ENCODE measurements at regions of chr6 and their contacts with region 1.

Region 1: GRCh38 chr6:50816115-50816675 is 2.5 kb upstream of the TFAP2B start:
- DNase-seq: peak; percentile 74
- H3K4me3 ChIP-seq: peak overlapping the region; percentile 4 to 62 (median 36)
- H3K27ac ChIP-seq: no peak overlapping the region
- H3K4me1 ChIP-seq: peaks cover 0 to 26% (median 12%) of the 10 kb centered on the region in 4 donors
- H3K27me3 ChIP-seq: peaks cover 82% of the 10 kb centered on the region
- CTCF ChIP-seq: peak; percentile 75 to 86 (median 80)
- EP300 ChIP-seq: no peak
- POLR2A ChIP-seq: no peak

Region 2: GRCh38 chr6:50539447-50539846 is 276.7 kb before region 1 on chr6:
- in situ Hi-C with region 1: no loop called
- intact Hi-C with region 1: no loop called
- DNase-seq: no peak
- H3K4me3 ChIP-seq: no peak overlapping the region
- H3K27ac ChIP-seq: no peak overlapping the region
- H3K4me1 ChIP-seq: no peaks in the 10 kb centered on the region
- H3K27me3 ChIP-seq: no peaks in the 10 kb centered on the region
- CTCF ChIP-seq: no peak
- EP300 ChIP-seq: no peak
- POLR2A ChIP-seq: no peak

Region 3: DNA sequence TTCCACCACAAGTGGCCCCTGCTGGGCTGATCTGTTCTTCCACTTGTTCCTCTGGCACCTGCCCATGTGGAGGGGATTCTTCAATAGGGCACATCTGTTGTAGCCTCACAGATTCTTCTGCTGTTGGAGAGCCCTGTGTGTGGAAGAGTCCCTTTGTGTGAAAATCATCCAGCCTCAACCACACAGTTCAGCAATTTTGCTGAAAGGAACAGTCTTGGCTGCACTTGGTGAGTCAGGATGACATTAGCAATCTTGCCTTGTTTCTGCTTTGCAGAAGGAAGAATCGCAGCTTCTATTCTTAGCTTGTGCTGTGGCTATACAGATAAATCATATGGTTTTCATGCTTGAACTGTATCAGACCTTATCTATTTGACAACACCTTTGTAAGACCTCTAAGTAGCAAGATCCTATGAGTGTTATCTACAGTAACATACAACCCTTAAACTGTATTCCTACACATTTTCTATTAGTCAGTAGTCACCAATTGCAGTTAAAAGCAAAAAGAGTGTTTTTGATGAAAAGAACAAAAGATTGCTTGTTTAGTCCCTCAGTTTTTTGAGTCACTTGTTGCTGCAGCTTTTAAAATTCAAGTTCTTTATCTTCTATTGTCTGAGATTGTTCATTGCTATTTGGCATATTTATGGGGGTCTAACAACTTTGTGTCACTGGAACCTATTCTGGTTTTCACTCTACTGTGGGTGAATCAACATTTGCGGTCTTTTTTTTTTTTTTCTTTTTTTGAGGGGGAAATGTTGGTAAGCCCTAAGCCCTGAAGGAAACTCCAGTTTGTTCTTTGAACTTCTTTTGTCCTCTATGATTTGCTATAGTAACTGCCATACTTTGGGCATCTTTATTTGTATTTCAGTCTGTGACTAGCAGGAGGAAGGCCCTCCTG is 234.0 kb after region 1 on chr6:
- in situ Hi-C with region 1: no loop called
- intact Hi-C with region 1: no loop called
- DNase-seq: no peak
- H3K4me3 ChIP-seq: no peak overlapping the region
- H3K27ac ChIP-seq: no peak overlapping the region
- H3K4me1 ChIP-seq: no peaks in the 10 kb centered on the region
- H3K27me3 ChIP-seq: no peaks in the 10 kb centered on the region
- CTCF ChIP-seq: no peak
- EP300 ChIP-seq: no peak
- POLR2A ChIP-seq: no peak

Region 4: GRCh38 chr6:51350308-51350904 is 534.2 kb after region 1 on chr6:
- in situ Hi-C with region 1: loop called in 1 of 4 experiments (anchors 25 kb)
- intact Hi-C with region 1: no loop called
- DNase-seq: no peak
- H3K4me3 ChIP-seq: no peak overlapping the region
- H3K27ac ChIP-seq: no peak overlapping the region
- H3K4me1 ChIP-seq: no peaks in the 10 kb centered on the region
- H3K27me3 ChIP-seq: no peaks in the 10 kb centered on the region
- CTCF ChIP-seq: peak; percentile 27 to 43 (median 31)
- EP300 ChIP-seq: no peak
- POLR2A ChIP-seq: no peak

Region 5: GRCh38 chr6:51541847-51542246 is 725.7 kb after region 1 on chr6:
- in situ Hi-C with region 1: loop called in 1 of 4 experiments (anchors 25 kb)
- intact Hi-C with region 1: no loop called
- DNase-seq: no peak
- H3K4me3 ChIP-seq: no peak overlapping the region
- H3K27ac ChIP-seq: no peak overlapping the region
- H3K4me1 ChIP-seq: no peaks in the 10 kb centered on the region
- H3K27me3 ChIP-seq: no peaks in the 10 kb centered on the region
- CTCF ChIP-seq: no peak
- EP300 ChIP-seq: no peak
- POLR2A ChIP-seq: no peak

Region 6: GRCh38 chr6:52020945-52021570 is 1204.9 kb after region 1 on chr6:
- in situ Hi-C with region 1: loop called (anchors 10 to 25 kb)
- intact Hi-C with region 1: no loop called
- DNase-seq: no peak
- H3K4me3 ChIP-seq: no peak overlapping the region
- H3K27ac ChIP-seq: no peak overlapping the region
- H3K4me1 ChIP-seq: peaks cover 0 to 13% (median 4%) of the 10 kb centered on the region in 4 donors
- H3K27me3 ChIP-seq: no peaks in the 10 kb centered on the region
- CTCF ChIP-seq: peak; percentile 68 to 84 (median 74)
- EP300 ChIP-seq: no peak
- POLR2A ChIP-seq: no peak

Region 7: DNA sequence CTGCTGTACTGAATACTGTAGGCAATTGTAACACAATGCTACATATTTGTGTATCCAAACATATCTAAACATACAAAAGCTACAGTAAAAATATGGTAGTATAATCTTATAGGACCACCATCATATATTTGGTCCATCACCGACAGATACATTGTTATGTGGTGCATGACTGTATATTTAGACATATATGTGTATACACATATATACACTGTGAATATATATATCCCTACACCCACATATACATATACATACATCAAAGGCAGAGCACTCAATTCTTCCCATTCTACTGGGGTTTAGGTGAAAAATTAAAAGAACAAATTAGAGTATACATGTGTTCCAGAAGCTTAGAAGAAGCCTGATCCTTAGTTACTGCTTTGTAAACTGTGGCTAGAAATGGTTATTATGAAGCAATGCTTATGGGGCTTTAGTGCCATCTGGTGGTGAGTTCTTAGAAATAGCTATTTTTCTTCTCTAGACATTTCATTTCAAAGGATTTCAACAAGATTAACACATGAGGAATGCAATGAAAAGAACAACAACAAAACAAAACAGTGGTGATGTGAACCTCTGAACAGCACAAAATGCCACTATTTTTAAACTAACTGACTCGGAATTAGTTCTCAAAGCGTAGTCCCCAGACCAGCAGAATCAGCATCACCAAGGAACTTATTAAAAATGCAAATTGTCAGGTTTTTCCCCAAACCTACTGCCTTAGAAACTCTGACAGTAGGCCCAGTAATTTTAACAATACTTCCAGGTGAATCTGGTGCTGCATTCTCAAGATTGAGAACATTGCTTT is 1233.3 kb after region 1 on chr6:
- in situ Hi-C with region 1: loop called in 1 of 4 experiments (anchors 25 kb)
- intact Hi-C with region 1: no loop called
- DNase-seq: no peak
- H3K4me3 ChIP-seq: no peak overlapping the region
- H3K27ac ChIP-seq: no peak overlapping the region
- H3K4me1 ChIP-seq: peaks cover 0 to 4% (median 0%) of the 10 kb centered on the region in 4 donors
- H3K27me3 ChIP-seq: no peaks in the 10 kb centered on the region
- CTCF ChIP-seq: peak; percentile 39 to 68 (median 62)
- EP300 ChIP-seq: no peak
- POLR2A ChIP-seq: no peak

Measured in transverse colon (tissue), 4 donors.